ENCODE measurements at regions of chr6 and their contacts with region 1.

Region 1: DNA sequence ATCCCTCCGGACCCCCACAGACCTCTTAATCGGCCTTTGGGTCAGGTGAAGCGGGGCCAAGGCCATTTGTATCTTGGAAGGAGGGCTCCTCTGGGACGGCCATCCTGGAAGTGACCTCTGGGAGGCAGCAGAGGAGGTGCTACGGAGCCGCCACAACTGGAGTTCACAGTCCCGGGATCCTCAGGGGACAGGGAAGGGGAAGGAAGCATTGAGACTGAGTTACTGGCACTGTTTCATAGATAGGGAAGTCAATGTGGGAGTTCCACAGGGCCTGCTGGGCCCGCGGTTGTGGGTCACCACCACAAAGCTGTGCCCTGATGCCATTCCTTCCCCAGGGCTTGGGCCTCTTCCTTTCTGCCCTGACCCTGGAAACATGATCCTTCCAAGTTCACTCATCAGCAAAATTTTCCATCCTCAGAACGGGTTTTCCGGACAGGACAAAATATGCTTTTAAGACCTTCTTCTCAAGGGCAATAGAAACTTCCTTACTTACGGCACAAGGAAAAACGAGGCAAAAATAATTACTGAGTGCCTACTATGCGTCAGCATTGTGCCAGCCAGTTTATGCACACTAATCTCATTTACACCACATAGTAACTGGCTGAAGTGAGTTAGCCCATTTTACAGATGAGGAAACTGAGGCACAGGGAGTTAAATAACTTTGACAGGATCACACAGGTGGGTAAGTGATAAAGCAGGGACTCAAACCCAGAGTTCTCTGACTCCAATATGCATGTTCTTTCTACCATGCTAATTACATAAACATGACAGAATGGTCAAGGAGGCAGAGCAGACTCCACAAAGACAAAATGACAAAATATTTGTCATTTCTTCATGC is 143.8 kb downstream of the UNC5CL start:
- DNase-seq: peak; percentile 23
- H3K4me3 ChIP-seq: no peak overlapping the region
- H3K27ac ChIP-seq: no peak overlapping the region
- H3K4me1 ChIP-seq: no peaks in the 10 kb centered on the region
- H3K27me3 ChIP-seq: no peaks in the 10 kb centered on the region
- CTCF ChIP-seq: peak; percentile 32 to 69

Region 2: DNA sequence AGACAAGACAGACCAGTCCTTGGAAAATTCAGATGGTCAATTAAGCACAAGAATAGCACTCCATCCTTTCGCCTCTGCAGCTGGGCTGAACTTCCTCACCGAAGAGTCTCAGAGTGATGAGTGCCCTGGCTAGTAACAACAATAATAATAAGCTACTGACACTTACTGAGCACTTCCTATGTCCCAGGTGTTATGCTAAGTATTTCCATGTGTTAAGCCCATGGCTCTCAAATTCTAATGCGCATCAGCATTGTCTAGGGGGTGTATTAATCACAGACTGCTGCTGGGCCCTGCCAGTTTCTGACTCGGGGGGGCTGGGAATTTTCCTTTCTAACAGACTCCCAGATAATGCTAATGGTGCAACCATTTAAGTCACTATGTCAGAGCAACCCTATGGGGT is 189.8 kb before region 1 on chr6:
- CTCF ChIA-PET with region 1: no interaction called
- dilution Hi-C with region 1: no loop called
- in situ Hi-C with region 1: no loop called
- intact Hi-C with region 1: no loop called
- DNase-seq: no peak
- H3K4me3 ChIP-seq: no peak overlapping the region
- H3K27ac ChIP-seq: no peak overlapping the region
- H3K4me1 ChIP-seq: no peaks in the 10 kb centered on the region
- H3K27me3 ChIP-seq: no peaks in the 10 kb centered on the region
- CTCF ChIP-seq: no peak

Region 3: DNA sequence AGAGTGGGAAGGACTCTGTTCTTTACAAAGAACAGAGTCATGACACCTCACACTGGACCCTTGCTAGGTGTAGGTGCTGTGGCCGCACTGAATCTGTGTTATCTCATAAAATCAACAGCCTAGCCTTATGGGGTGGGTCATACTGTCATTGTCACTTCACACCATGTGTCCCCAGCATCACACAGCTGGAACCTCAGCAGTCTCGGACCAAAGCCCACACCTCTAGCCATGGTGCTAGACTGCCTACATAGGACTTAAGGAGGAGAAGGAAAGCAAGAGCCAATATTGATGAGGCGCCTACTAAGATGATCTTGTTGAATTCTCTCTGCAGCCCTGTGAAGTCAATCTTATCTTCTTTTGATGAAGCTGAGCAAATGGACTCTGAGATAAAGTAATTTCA is 112.8 kb after region 1 on chr6:
- CTCF ChIA-PET with region 1: no interaction called
- dilution Hi-C with region 1: no loop called
- in situ Hi-C with region 1: no loop called
- intact Hi-C with region 1: loop called (anchors 5 kb)
- DNase-seq: no peak
- H3K4me3 ChIP-seq: no peak overlapping the region
- H3K27ac ChIP-seq: no peak overlapping the region
- H3K4me1 ChIP-seq: no peaks in the 10 kb centered on the region
- H3K27me3 ChIP-seq: no peaks in the 10 kb centered on the region
- CTCF ChIP-seq: no peak

Region 4: DNA sequence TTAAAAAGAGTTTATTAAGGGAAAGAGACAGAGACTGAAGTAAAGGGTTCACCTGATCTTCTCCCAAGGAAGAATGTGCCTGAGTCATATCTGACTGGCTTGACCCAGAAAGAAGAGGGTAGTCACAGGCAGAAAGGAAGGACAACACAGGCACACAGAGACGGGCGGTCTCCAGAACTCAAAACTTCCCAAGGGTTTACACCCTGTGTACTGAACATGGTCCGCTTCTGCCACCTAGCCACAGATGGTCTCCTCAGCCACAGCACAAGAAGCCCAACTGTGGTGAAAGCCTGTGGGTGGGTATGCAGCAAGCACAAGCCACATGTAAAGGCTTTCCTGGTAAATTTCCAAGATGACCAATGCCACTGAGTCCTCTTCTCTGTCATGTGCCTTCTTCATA is 126.7 kb after region 1 on chr6:
- CTCF ChIA-PET with region 1: no interaction called
- dilution Hi-C with region 1: no loop called
- in situ Hi-C with region 1: loop called (anchors 5 to 10 kb)
- intact Hi-C with region 1: loop called (anchors 1 kb)
- DNase-seq: peak; percentile 70
- H3K4me3 ChIP-seq: no peak overlapping the region
- H3K27ac ChIP-seq: peak overlapping the region; percentile 71
- H3K4me1 ChIP-seq: peaks cover 32% of the 10 kb centered on the region
- H3K27me3 ChIP-seq: no peaks in the 10 kb centered on the region
- CTCF ChIP-seq: peak; percentile 7 to 42

Region 5: GRCh38 chr6:41039060-41039998 is 144.1 kb after region 1 on chr6 and contains the start of gene UNC5CL:
- CTCF ChIA-PET with region 1: no interaction called
- dilution Hi-C with region 1: no loop called
- in situ Hi-C with region 1: no loop called
- intact Hi-C with region 1: loop called (anchors 1 kb)
- DNase-seq: peak; percentile 57
- H3K4me3 ChIP-seq: no peak within 1 kb of the TSS
- H3K27ac ChIP-seq: no peak within 1 kb of the TSS
- H3K4me1 ChIP-seq: peaks cover 43% of the 10 kb centered on the region
- H3K27me3 ChIP-seq: no peaks in the 10 kb centered on the region
- CTCF ChIP-seq: peak; percentile 87 to 93
- total RNA-seq, gene UNC5CL: 0.50 to 0.54 TPM

Region 6: DNA sequence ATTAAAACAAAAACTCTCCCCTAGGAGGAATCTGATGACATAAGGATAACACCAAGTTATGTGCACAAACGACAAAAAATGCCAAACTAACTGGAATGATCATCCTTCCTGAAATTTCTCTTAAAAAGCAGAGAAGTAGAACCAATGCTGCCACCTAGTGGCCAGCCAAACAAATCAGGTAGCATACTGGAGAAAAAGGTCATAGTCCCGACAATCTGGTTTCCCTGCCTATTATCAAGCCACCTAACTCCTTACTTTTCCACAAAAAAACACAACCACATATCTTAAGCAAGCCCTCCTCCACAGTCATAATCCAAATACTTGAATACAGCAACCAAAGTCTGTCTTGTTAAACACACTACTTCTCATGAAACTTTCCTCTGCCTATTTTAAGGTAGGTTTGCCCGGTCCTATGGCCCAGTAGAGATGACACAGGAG is 171.7 kb after region 1 on chr6:
- CTCF ChIA-PET with region 1: no interaction called
- dilution Hi-C with region 1: no loop called
- in situ Hi-C with region 1: no loop called
- intact Hi-C with region 1: loop called (anchors 1 kb)
- DNase-seq: peak; percentile 43
- H3K4me3 ChIP-seq: no peak overlapping the region
- H3K27ac ChIP-seq: no peak overlapping the region
- H3K4me1 ChIP-seq: peaks cover 11% of the 10 kb centered on the region
- H3K27me3 ChIP-seq: no peaks in the 10 kb centered on the region
- CTCF ChIP-seq: peak; percentile 76 to 82

Measured in mammary epithelial cell (primary cell).